ENCODE measurements at regions of chr1 and their contacts with region 1.

Region 1: DNA sequence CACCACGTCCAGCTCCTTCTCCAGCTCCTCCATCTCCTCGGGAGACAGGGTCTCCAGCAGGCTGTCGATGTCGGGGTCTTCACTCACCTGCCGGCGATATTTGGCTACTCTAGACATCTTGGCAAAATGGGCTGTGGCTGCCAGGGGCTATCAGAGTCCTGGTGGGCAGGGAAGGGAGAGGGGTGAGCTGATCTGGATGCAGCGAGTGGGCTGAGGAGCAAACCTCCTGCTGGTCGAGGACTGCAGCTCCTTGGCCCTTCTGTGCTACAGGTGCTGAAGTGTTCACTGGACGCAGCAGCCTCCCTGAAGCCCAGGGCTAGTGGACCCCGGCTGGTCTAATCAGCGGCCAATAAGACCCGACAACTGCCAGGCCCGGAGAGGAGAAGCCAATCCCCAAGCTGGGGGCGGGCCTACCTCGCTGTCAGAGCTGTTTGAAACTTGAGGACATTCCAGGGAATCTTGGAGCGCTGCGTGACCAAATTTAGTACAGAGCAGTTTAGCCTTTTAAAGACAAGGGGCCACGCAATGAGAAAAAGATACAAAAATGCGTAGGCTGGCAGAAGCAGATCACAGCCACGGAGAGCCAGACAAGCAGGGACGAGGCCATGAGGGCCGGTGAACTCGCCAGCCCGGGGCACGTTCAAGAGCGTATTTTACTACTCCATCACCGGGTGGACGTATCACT is at the start of gene LMOD1:
- DNase-seq: peak in 1 of 2 donors; percentile 94
- H3K4me3 ChIP-seq: peak within 1 kb of the TSS; percentile 65 to 96
- H3K27ac ChIP-seq: peak within 1 kb of the TSS; percentile 88
- H3K4me1 ChIP-seq: peaks cover 14% of the 10 kb centered on the region
- H3K27me3 ChIP-seq: no peaks in the 10 kb centered on the region
- CTCF ChIP-seq: no peak
- POLR2A ChIP-seq: peak in 1 of 2 donors; percentile 74
- total RNA-seq, gene LMOD1: 107 TPM

Region 2: DNA sequence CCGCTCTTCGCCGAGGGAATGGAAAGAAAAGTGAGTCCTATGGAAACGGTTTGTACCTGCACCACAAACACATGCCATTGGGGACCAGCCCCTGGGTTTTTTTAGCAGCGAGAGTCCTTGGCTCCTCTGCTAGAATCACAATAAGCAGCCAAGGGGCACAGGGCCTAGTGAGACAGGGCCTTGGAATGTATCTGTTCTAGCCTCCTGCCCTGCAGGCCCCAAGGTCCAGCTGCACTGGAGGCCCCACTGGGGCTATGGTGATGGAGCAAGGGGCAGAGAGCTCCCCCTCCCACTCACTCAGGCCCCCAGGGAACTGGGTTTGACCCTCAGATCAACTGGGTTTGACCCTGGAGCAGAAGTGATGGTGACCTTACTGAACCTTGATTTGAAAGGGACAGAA is 43.2 kb before region 1 on chr1:
- intact Hi-C with region 1: loop called (anchors 2 kb)
- DNase-seq: no peak
- H3K4me3 ChIP-seq: no peak overlapping the region
- H3K27ac ChIP-seq: peak overlapping the region; percentile 93
- H3K4me1 ChIP-seq: peaks cover 68% of the 10 kb centered on the region
- H3K27me3 ChIP-seq: no peaks in the 10 kb centered on the region
- CTCF ChIP-seq: no peak
- POLR2A ChIP-seq: no peak

Region 3: GRCh38 chr1:202034683-202035462 is 88.5 kb after region 1 on chr1:
- intact Hi-C with region 1: no loop called
- DNase-seq: peak in 1 of 2 donors; percentile 97
- H3K4me3 ChIP-seq: no peak overlapping the region
- H3K27ac ChIP-seq: peak overlapping the region; percentile 61
- H3K4me1 ChIP-seq: peaks cover 16% of the 10 kb centered on the region
- H3K27me3 ChIP-seq: no peaks in the 10 kb centered on the region
- CTCF ChIP-seq: no peak
- POLR2A ChIP-seq: no peak

Measured in vagina (tissue), 2 donors.